CD8-positive, alpha-beta memory T cell (primary cell): ENCODE measurements at regions of chr1 and their contacts with region 1.

Region 1: GRCh38 chr1:19462781-19463503 is 22.4 kb downstream of the CAPZB start:
- DNase-seq: peak; percentile 41 to 85 (median 77)
- H3K4me3 ChIP-seq: peak overlapping the region; percentile 67
- H3K4me3 Mint-ChIP-seq: peak overlapping the region; percentile 40 to 89 (median 80)
- H3K27ac ChIP-seq: peak overlapping the region; percentile 14
- H3K27ac Mint-ChIP-seq: peak overlapping the region; percentile 70 to 98 (median 92)
- H3K4me1 ChIP-seq: peaks cover 100% of the 10 kb centered on the region
- H3K4me1 Mint-ChIP-seq: peaks cover 84 to 96% (median 95%) of the 10 kb centered on the region in 3 donors
- H3K27me3 ChIP-seq: no peaks in the 10 kb centered on the region
- H3K27me3 Mint-ChIP-seq: no peaks in the 10 kb centered on the region

Region 2: DNA sequence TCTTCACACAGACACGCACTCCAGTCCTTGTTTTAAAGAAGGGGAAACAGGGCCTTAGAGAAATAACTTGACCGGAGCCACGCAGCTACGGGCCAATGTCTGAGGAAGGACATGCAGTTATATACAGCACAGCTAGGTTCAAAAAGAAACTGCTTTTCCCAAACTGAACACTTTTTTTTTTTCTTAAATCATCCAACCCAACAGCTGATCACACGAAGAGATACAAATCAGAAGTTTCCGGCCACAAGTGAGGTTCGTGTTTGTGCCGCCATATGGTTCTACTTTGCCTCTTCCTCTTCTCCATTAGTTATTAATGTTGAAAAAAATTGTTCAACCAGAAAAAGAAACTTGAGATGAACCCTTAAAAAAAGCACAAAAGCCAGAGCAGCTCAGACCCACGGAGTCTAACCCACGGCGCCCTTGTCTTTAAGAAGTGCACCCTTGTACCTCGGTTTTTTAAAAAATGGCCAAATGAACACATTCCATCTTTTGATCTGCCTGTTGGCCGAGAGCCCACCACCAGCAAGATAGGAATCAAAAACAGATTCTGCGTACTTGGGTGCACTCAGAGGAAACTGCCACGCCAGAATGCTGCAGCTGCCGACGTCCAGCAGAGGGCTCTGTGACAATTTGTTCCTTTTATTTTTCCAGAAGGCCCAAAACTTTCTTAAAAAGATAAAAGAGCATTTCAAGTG is 71.9 kb before region 1 on chr1:
- CTCF ChIA-PET with region 1: interaction called, 11 read pairs
- POLR2A ChIA-PET with region 1: no interaction called
- DNase-seq: peak; percentile 40 to 83 (median 76)
- H3K4me3 ChIP-seq: peak overlapping the region; percentile 44
- H3K4me3 Mint-ChIP-seq: peak overlapping the region; percentile 74 to 93 (median 80)
- H3K27ac ChIP-seq: peak overlapping the region; percentile 49
- H3K27ac Mint-ChIP-seq: peak overlapping the region; percentile 87 to 98 (median 91)
- H3K4me1 ChIP-seq: peaks cover 56% of the 10 kb centered on the region
- H3K4me1 Mint-ChIP-seq: peaks cover 70 to 92% (median 80%) of the 10 kb centered on the region in 3 donors
- H3K27me3 ChIP-seq: no peaks in the 10 kb centered on the region
- H3K27me3 Mint-ChIP-seq: peaks cover 0 to 2% of the 10 kb centered on the region in 2 donors

Region 3: DNA sequence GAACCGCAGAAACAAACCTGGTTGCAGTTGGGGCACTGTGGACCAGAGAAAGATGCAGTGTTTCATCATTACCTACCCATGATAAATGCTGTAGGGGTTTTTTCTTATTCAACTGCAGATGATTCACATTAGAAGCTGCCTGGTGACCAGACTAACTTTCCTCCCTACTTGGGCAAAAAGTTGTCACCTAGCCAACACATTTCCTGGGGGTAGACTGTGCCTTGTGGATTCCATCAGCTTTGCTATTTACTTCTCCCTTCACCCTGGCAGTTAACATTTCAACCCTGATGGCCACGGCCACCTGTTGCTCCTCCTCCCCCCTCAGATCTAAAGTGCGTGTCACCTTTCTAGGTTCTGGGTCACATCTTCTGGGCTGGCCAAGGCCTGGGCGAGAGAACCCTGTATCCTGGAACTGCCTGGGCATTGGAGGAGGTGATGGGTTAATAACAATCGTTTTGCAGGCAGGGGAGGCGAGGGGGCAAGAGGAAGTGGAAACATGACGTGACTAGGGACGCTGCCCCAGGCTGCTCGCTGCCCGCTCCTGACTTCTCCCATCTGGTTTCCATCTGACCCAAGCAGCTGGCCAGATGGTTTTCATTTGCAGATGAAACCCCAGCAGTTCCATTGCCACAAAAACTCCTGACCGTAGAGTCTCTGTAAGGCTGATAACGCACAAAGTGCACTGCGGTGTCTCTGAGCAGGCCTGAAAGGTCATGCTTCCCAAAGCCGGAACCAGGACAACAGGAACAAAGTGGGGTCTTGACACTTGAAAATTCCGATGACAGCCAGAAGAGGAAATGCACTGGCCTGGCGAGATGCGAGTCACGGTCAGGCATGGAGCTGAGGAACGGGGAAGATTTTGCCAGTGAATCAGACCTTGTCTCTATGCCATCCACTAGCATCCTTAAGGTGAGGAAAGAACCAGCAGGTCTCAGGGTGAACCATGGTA is 14.2 kb before region 1 on chr1:
- CTCF ChIA-PET with region 1: interaction called, 11 read pairs
- POLR2A ChIA-PET with region 1: interaction called, 3 read pairs
- DNase-seq: no peak
- H3K4me3 ChIP-seq: no peak overlapping the region
- H3K4me3 Mint-ChIP-seq: peak overlapping the region in 6 of 7 donors; percentile 2 to 46 (median 23)
- H3K27ac ChIP-seq: no peak overlapping the region
- H3K27ac Mint-ChIP-seq: peak overlapping the region; percentile 46 to 96 (median 76)
- H3K4me1 ChIP-seq: peaks cover 78% of the 10 kb centered on the region
- H3K4me1 Mint-ChIP-seq: peaks cover 77 to 99% (median 95%) of the 10 kb centered on the region in 3 donors
- H3K27me3 ChIP-seq: no peaks in the 10 kb centered on the region
- H3K27me3 Mint-ChIP-seq: no peaks in the 10 kb centered on the region

Region 4: DNA sequence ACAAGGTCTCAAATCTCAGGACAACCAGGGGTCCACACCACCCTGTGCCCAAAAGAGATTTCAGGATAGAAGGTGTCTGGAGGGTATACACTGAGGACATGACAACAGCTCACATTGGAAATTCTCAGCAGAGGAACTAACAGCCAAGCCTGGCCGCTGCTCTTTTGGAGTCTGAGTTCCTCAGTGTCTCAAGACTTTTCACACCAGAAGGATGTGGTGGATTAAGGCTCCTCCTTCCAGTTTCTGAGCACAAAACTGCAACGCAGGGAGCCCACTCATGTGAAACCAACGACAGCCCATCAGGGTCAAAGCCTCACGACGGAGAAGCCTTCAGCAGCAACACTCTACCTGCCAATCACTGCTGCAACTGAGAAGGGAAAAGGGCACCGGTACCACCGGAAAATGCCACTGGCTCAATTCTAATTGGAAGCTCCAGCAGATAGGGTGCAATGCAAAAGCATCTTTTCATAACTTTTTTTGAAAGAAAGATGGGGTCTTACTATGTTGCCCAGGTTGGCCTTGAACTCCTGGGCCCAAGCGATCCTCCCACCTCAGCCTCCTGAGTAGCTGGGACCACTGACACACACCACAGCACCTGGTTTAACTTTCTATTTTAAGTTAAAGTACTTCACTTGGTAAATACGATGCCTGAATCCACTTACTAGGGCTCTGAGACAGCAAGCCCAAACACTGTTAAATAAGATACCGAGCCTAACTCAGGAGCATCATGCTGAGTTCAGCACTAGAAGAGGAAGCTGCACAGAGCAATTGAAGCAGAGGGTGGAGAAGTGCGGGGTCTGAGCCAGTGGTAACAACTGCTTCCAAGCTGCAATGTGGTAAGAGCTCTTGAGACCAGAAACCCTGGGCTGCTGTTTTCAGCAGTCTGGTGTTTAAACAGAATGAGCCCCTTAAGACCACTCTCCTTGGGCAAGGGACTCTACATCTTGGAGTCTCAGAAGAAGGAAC is 14.6 kb after region 1 on chr1:
- CTCF ChIA-PET with region 1: interaction called, 93 read pairs
- POLR2A ChIA-PET with region 1: interaction called, 19 read pairs
- DNase-seq: peak; percentile 29 to 68 (median 56)
- H3K4me3 ChIP-seq: peak overlapping the region; percentile 70
- H3K4me3 Mint-ChIP-seq: peak overlapping the region; percentile 76 to 90 (median 86)
- H3K27ac ChIP-seq: peak overlapping the region; percentile 74
- H3K27ac Mint-ChIP-seq: peak overlapping the region; percentile 87 to 98 (median 97)
- H3K4me1 ChIP-seq: peaks cover 96% of the 10 kb centered on the region
- H3K4me1 Mint-ChIP-seq: peaks cover 90 to 99% (median 96%) of the 10 kb centered on the region in 3 donors
- H3K27me3 ChIP-seq: no peaks in the 10 kb centered on the region
- H3K27me3 Mint-ChIP-seq: no peaks in the 10 kb centered on the region

Region 5: DNA sequence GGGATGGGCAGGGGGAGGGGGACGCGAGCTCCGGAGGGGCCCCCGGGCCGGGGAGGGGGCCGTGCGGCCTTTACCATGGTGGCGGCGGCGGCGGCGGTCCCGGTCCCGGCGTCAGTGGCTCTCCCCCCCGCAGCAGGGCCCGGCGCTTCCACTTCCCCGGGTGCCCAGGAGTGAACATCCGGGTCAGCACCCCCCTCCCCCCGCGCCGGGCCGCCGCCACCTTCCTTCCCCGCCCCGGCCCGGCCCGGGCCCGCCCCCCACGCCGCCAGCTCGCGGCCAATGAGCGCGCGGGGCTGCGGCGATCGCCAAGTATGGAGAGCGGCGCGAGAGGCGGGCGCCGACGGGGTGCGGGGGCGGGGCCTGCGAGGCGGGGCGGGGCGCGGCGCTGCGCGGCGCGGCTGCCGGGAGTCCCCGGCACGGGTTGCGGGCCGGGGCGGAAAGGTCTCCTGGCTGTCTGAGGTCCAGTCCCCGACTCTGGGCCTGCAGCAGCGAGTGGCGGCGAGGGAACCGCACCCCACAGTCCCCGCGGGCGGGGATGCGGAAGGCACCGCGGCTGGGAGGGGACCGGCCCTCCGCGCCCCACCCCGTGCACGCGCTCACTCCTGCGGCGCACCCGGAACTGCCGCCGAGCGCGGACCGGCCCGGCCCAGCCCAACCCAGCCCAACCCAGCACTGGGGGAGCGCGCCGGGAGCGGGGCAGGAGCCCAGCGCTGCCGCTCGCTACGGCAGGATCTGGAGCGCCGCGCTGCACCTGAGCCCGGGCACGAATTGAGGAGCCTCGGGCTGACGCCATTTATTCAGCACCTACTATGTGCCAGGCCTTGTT is 22.6 kb after region 1 on chr1 and contains the start of gene CAPZB:
- CTCF ChIA-PET with region 1: interaction called, 93 read pairs
- POLR2A ChIA-PET with region 1: interaction called, 13 read pairs
- DNase-seq: peak; percentile 89 to 96 (median 91)
- H3K4me3 ChIP-seq: peak within 1 kb of the TSS; percentile 64
- H3K4me3 Mint-ChIP-seq: peak within 1 kb of the TSS; percentile 92 to 99 (median 94)
- H3K27ac ChIP-seq: peak within 1 kb of the TSS; percentile 88
- H3K27ac Mint-ChIP-seq: peak within 1 kb of the TSS; percentile 93 to 98 (median 96)
- H3K4me1 ChIP-seq: peaks cover 62% of the 10 kb centered on the region
- H3K4me1 Mint-ChIP-seq: peaks cover 58 to 70% (median 69%) of the 10 kb centered on the region in 3 donors
- H3K27me3 ChIP-seq: no peaks in the 10 kb centered on the region
- H3K27me3 Mint-ChIP-seq: peaks cover 0 to 5% of the 10 kb centered on the region in 2 donors
- total RNA-seq, gene CAPZB: 284 to 289 TPM

Region 6: GRCh38 chr1:19552291-19553010 is 89.5 kb after region 1 on chr1:
- CTCF ChIA-PET with region 1: no interaction called
- POLR2A ChIA-PET with region 1: no interaction called
- DNase-seq: no peak
- H3K4me3 ChIP-seq: no peak overlapping the region
- H3K4me3 Mint-ChIP-seq: no peak overlapping the region
- H3K27ac ChIP-seq: no peak overlapping the region
- H3K27ac Mint-ChIP-seq: peak overlapping the region in 1 of 8 donors; percentile 4
- H3K4me1 ChIP-seq: no peaks in the 10 kb centered on the region
- H3K4me1 Mint-ChIP-seq: peaks cover 6 to 12% (median 9%) of the 10 kb centered on the region in 3 donors
- H3K27me3 ChIP-seq: no peaks in the 10 kb centered on the region
- H3K27me3 Mint-ChIP-seq: peaks cover 7 to 22% of the 10 kb centered on the region in 2 donors

Region 7: GRCh38 chr1:19872190-19872589 is 409.2 kb after region 1 on chr1:
- CTCF ChIA-PET with region 1: no interaction called
- POLR2A ChIA-PET with region 1: no interaction called
- DNase-seq: no peak
- H3K4me3 ChIP-seq: no peak overlapping the region
- H3K4me3 Mint-ChIP-seq: no peak overlapping the region
- H3K27ac ChIP-seq: no peak overlapping the region
- H3K27ac Mint-ChIP-seq: no peak overlapping the region
- H3K4me1 ChIP-seq: no peaks in the 10 kb centered on the region
- H3K4me1 Mint-ChIP-seq: no peaks in the 10 kb centered on the region
- H3K27me3 ChIP-seq: peaks cover 7% of the 10 kb centered on the region
- H3K27me3 Mint-ChIP-seq: peaks cover 8 to 64% of the 10 kb centered on the region in 2 donors